ENCODE measurements at regions of chr10 and their contacts with region 1.

Region 1: DNA sequence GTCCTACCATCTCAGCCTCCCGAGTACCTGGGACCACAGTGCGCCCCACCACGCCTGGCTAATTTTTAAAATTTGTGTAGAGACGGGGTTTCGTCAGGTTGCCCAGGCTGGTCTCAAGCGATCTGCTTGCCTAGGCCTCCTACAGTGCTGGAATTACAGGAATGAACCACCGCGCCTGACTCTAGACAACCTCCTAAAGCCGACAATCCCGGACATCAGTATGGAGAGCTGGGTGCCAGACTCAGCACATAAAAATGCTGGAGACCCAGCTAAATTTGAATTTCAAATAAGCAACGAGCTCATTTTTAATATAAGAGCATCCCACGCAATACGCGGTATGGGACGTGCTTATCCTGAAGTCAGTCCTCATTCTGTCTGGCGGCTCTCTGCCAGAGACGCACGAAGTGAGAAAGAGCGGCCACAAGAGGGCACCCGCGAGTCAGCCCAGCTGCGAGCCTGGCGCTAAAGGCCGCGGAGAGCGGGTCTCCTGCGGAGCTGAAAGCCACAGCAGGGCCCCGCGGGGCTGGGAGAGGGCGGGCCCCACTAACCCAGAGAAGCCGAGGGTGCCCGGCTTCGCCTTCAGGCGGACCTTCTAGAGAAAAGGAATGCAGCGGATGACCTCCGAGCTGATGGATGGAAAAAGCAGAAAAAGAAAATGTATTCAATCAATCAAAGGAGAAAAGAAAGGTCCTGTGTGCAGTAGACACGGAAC is 7.0 kb downstream of the CALY start:
- DNase-seq: peak; percentile 85
- H3K4me3 Mint-ChIP-seq: no peak overlapping the region
- H3K27ac Mint-ChIP-seq: no peak overlapping the region
- H3K4me1 Mint-ChIP-seq: peaks cover 11% of the 10 kb centered on the region
- H3K27me3 Mint-ChIP-seq: peaks cover 68% of the 10 kb centered on the region

Region 2: DNA sequence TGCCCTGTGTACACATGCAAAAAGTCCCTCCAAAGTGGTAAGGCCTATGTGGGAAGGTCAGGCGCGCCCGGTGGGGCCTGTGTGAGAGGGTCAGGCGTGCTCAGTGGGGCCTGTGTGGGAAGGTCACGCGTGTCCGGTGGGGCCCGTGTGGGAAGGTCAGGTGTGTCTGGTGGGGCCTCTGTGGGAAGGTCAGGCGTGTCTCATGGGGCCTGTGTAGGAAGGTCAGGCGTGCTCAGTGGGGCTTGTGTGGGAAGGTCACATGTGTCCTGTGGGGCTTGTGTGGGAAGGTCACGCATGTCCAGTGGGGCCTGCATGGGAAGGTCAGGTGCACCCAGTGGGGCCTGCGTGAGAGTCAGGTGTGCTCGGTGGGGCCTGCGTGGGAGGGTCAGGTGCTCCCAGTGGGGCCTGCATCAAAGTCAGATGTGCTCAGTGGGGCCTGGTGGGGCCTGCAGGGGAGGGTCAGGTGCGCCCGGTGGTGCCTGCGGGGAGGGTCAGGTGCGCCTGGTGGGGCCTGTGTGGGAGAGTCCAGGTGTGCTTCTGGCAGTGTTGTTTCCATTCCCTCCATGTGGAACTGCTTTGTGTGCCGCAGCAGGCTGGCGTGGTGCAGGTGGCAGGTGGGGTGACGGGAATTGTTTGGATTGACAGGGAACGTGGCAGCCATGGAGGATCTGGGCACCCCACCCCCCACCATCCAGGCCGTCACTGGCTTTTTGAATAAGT is 982.3 kb before region 1 on chr10:
- CTCF ChIA-PET with region 1: no interaction called
- POLR2A ChIA-PET with region 1: no interaction called
- DNase-seq: no peak
- H3K4me3 Mint-ChIP-seq: no peak overlapping the region
- H3K27ac Mint-ChIP-seq: no peak overlapping the region
- H3K4me1 Mint-ChIP-seq: no peaks in the 10 kb centered on the region
- H3K27me3 Mint-ChIP-seq: no peaks in the 10 kb centered on the region

Region 3: GRCh38 chr10:133318494-133319127 is 11.0 kb before region 1 on chr10:
- CTCF ChIA-PET with region 1: interaction called, 11 read pairs
- POLR2A ChIA-PET with region 1: no interaction called
- DNase-seq: peak; percentile 75
- H3K4me3 Mint-ChIP-seq: peak overlapping the region; percentile 54
- H3K27ac Mint-ChIP-seq: no peak overlapping the region
- H3K4me1 Mint-ChIP-seq: peaks cover 15% of the 10 kb centered on the region
- H3K27me3 Mint-ChIP-seq: peaks cover 12% of the 10 kb centered on the region

Measured in activated CD4-positive, alpha-beta memory T cell treated with anti-CD3 and anti-CD28 coated beads, Interleukin-2, amount 10 ng/mL, durations not matched to agents 7 days and 5 days (primary cell).